Activated naive CD4-positive, alpha-beta T cell treated with anti-CD3 and anti-CD28 coated beads for 36 hours (primary cell): ENCODE measurements at regions of chr16 and their contacts with region 1.

Region 1: DNA sequence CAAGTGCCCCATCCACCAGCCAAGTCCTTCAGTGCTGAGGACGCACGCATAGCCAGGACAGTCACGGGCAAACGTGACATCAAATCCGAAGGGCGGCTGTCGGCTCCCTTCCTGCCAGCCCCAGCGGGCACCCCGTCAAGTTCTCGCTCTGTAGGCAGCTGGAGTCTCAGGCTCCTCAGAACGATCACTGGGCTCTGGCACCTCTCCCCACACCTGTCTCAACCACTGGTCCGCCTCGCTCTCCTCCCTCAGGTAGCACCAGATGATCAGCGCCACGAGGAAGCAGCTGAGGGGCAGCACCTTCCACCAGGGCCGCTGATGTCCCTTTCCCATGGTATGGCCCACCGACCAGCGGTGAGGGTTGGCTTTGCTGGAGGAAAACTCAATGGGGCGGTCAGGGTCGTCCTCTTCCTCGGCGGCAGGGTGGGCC is 421 bp downstream of the UQCC4 start:
- DNase-seq: no peak
- H3K4me3 Mint-ChIP-seq: peak overlapping the region; percentile 80
- H3K27ac Mint-ChIP-seq: peak overlapping the region; percentile 70
- H3K4me1 Mint-ChIP-seq: peaks cover 33% of the 10 kb centered on the region
- H3K27me3 Mint-ChIP-seq: no peaks in the 10 kb centered on the region

Region 2: GRCh38 chr16:1308977-1309885 is 110.9 kb before region 1 on chr16 and contains the start of gene UBE2I:
- CTCF ChIA-PET with region 1: no interaction called
- intact Hi-C with region 1: loop called (anchors 2 kb)
- DNase-seq: peak; percentile 98
- H3K4me3 Mint-ChIP-seq: peak within 1 kb of the TSS; percentile 94
- H3K27ac Mint-ChIP-seq: peak within 1 kb of the TSS; percentile 99
- H3K4me1 Mint-ChIP-seq: peaks cover 41% of the 10 kb centered on the region
- H3K27me3 Mint-ChIP-seq: no peaks in the 10 kb centered on the region
- total RNA-seq, gene UBE2I: 273 to 297 TPM

Region 3: DNA sequence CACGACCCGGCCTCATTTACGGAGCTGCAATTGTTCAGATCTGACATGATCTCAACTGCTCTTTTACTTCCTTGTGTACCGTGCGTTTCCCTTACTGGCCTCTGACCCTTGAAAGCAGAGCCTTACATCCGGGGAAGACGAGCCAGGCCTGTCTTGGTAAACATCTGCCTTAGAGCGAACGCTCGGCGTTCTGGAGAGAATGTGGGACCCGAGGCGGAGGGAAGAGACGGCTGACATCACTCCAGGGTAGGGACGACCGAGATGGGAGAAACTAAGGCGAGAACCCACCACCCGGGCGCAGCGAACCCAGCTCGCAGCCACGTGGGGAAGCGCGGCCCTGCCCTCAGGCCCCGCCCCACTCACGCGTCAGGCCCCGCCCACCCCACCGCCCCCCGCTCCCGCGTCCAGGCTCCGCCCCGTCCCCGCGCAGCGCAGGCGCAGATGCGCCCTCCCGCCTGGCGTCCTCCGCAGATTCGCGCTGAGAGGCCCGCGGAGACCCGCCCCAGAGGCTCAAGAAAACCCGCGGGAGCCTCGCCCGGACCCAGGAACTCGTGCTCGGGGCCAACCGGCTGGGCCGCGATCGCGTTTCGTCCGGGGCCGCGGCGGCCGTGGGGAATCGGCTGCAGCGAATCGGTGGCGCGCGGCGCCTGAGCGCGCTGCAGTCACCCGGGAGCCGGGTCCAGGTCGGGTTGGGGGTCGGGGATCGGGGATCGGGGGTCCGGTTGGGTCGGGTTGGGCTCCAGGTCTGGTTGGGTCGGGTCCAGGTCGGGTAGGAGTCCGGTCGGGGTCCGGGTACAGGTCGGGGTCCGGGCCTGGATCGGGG is 73.0 kb after region 1 on chr16 and contains the start of gene TELO2:
- CTCF ChIA-PET with region 1: no interaction called
- intact Hi-C with region 1: loop called (anchors 1 kb)
- DNase-seq: peak; percentile 85
- H3K4me3 Mint-ChIP-seq: peak within 1 kb of the TSS; percentile 90
- H3K27ac Mint-ChIP-seq: peak within 1 kb of the TSS; percentile 94
- H3K4me1 Mint-ChIP-seq: peaks cover 16% of the 10 kb centered on the region
- H3K27me3 Mint-ChIP-seq: no peaks in the 10 kb centered on the region
- total RNA-seq, gene TELO2: 68.1 to 76.1 TPM

Region 4: DNA sequence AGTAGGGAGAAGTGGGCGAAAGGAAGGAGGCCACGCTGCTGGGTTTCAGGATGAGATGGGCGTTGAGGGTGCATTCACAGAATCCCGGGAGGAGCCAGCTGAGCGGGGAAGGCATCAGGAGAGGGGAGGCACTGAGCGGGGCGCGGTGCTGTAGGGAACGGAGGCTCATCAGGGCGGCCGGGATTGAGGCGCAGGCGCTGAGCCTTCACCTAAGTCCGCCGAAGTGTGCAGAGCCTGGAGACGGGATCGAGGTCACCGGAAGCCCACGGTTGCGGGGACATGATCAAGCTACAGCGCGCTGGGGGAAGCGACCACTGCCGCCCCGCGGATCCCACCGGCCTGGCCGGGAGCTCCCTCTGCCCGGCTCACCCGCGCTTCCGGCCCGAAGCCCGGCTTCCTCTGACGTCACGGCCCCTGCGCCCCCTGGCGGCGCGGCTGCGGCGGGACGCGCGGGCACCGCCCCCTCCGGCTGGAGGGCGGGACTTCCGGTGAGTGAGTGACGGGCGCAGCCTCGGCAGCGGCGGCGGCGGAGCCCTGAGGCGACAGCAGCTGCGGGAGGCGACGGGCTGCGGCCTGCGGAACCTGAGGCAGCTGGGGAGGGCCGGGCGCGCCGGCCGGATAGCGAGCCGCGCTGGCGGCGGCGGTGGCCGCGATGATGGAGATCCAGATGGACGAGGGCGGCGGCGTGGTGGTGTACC is 285.7 kb after region 1 on chr16 and contains the start of gene MAPK8IP3:
- CTCF ChIA-PET with region 1: interaction called, 4 read pairs
- intact Hi-C with region 1: loop called (anchors 2 kb)
- DNase-seq: peak; percentile 91
- H3K4me3 Mint-ChIP-seq: peak within 1 kb of the TSS; percentile 98
- H3K27ac Mint-ChIP-seq: peak within 1 kb of the TSS; percentile 92
- H3K4me1 Mint-ChIP-seq: peaks cover 32% of the 10 kb centered on the region
- H3K27me3 Mint-ChIP-seq: no peaks in the 10 kb centered on the region
- total RNA-seq, gene MAPK8IP3: 46.5 to 50.7 TPM

Region 5: DNA sequence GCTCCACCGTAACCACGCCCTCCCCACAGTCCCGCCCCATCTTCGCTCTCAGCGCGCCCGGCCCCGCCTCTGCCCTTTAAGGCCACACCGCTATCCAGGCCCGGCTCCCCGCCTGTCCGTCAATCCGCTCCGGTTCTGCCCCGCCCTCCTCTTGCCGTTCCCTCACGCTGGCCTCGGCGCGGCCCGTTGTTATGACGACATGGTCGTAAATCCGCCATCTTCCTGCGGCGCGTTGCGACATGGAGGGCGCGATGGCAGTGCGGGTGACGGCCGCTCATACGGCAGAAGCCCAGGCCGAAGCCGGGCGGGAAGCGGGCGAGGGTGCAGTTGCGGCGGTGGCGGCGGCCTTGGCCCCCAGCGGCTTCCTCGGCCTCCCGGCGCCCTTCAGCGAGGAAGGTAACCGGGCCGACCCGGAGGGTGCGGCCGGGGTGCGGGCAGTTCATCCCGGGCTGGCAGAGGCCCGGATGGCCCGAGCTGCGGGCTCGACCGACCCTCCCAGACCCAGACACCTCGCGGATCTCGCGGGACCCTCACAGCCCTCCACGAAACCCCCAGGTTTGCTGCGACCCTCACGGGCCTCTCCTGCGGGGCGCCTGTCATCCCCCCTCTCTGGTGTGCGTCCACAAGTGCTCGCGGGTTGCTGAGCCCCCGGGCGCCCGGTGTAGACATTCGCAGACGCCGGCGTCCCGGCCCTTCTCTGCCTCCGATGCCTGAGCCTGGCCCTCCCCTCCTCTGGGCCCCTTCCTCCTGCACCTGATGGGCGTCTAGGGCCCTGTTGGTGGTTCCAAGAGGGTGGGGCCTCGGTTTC is 803.5 kb after region 1 on chr16 and contains the start of gene E4F1:
- CTCF ChIA-PET with region 1: no interaction called
- intact Hi-C with region 1: loop called (anchors 2 kb)
- DNase-seq: peak; percentile 100
- H3K4me3 Mint-ChIP-seq: peak within 1 kb of the TSS; percentile 78
- H3K27ac Mint-ChIP-seq: peak within 1 kb of the TSS; percentile 18
- H3K4me1 Mint-ChIP-seq: peaks cover 22% of the 10 kb centered on the region
- H3K27me3 Mint-ChIP-seq: no peaks in the 10 kb centered on the region
- total RNA-seq, gene E4F1: 21.2 to 21.7 TPM

Region 6: GRCh38 chr16:2531767-2532493 is 1111.8 kb after region 1 on chr16:
- CTCF ChIA-PET with region 1: no interaction called
- intact Hi-C with region 1: no loop called
- DNase-seq: peak; percentile 99
- H3K4me3 Mint-ChIP-seq: peak overlapping the region; percentile 92
- H3K27ac Mint-ChIP-seq: peak overlapping the region; percentile 97
- H3K4me1 Mint-ChIP-seq: peaks cover 16% of the 10 kb centered on the region
- H3K27me3 Mint-ChIP-seq: no peaks in the 10 kb centered on the region